ENCODE measurements at regions of chr9 and their contacts with region 1.

Region 1: DNA sequence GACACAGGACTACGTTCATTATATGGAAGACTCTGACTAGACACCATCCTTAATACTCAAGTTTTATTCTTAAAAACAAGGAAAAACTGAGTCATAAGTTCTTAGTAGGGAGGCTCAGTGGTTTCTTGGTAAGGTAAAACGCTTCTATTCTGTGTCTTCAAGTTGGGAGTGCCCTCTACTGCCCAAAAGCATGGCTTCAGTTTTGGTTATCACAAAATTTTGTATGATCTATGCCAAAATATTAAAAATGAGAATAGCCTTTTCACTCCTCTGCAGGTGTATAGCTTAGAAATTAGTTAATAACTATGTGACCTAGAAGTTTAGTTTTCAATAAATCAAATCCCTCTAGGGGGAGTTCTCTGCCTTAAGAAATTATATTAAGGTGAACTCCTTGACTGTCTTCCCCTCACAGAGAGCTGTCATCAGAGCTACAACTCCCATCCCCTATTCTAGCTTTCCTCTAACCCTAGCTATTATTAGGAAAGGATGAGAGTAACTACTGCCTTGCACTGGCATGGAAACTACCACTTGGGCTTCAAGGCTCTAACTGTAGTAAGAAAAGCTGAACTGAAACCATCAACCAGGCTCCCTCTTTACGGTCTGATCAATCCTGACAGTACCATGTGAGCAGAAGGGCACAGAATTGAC is 189.7 kb downstream of the GNAQ start:
- DNase-seq: peak; percentile 48
- ATAC-seq: peak; percentile 31
- H3K4me3 ChIP-seq: no peak overlapping the region
- H3K4me3 Mint-ChIP-seq: no peak overlapping the region
- H3K27ac ChIP-seq: no peak overlapping the region
- H3K27ac Mint-ChIP-seq: no peak overlapping the region
- H3K4me1 ChIP-seq: peaks cover 7 to 12% of the 10 kb centered on the region in 2 donors
- H3K4me1 Mint-ChIP-seq: peaks cover 8% of the 10 kb centered on the region
- H3K27me3 ChIP-seq: no peaks in the 10 kb centered on the region
- H3K27me3 Mint-ChIP-seq: no peaks in the 10 kb centered on the region
- CTCF ChIP-seq: no peak

Region 2: GRCh38 chr9:77827104-77827784 is 14.6 kb before region 1 on chr9:
- CTCF ChIA-PET with region 1: no interaction called
- POLR2A ChIA-PET with region 1: no interaction called
- intact Hi-C with region 1: no loop called
- DNase-seq: peak; percentile 17
- ATAC-seq: no peak
- H3K4me3 ChIP-seq: no peak overlapping the region
- H3K4me3 Mint-ChIP-seq: peak overlapping the region; percentile 37
- H3K27ac ChIP-seq: no peak overlapping the region
- H3K27ac Mint-ChIP-seq: no peak overlapping the region
- H3K4me1 ChIP-seq: peaks cover 0 to 4% of the 10 kb centered on the region in 2 donors
- H3K4me1 Mint-ChIP-seq: peaks cover 12% of the 10 kb centered on the region
- H3K27me3 ChIP-seq: no peaks in the 10 kb centered on the region
- H3K27me3 Mint-ChIP-seq: no peaks in the 10 kb centered on the region
- CTCF ChIP-seq: no peak

Region 3: GRCh38 chr9:77944556-77945243 is 102.8 kb after region 1 on chr9:
- CTCF ChIA-PET with region 1: no interaction called
- POLR2A ChIA-PET with region 1: interaction called, 10 read pairs
- intact Hi-C with region 1: no loop called
- DNase-seq: peak; percentile 18
- ATAC-seq: no peak
- H3K4me3 ChIP-seq: peak overlapping the region in 1 of 5 experiments; percentile 23
- H3K4me3 Mint-ChIP-seq: no peak overlapping the region
- H3K27ac ChIP-seq: no peak overlapping the region
- H3K27ac Mint-ChIP-seq: no peak overlapping the region
- H3K4me1 ChIP-seq: peaks cover 11 to 12% of the 10 kb centered on the region in 2 donors
- H3K4me1 Mint-ChIP-seq: peaks cover 7% of the 10 kb centered on the region
- H3K27me3 ChIP-seq: peaks cover 0 to 3% (median 0%) of the 10 kb centered on the region in 4 experiments
- H3K27me3 Mint-ChIP-seq: peaks cover 9% of the 10 kb centered on the region
- CTCF ChIP-seq: no peak